ENCODE measurements at regions of chr2 and their contacts with region 1.

Region 1: DNA sequence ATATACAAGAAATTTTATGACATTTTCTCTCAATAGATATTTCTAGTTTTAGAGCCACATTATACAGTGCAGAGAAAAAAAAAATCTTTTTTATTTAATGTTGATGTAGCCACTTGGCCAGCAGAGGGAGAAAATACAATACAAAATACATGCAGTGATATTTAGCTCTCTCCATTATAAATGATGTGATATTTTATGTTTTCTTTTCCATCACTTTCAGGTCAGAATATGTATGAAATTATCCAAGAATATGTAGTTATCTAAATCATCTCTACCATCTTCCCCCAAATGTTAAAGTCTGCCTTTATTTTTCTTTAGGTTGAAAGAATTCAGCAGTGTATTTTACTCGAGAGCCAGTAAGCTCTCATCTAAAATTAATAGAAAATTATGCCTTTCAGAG is 533.6 kb upstream of the FSHR start:
- DNase-seq: no peak
- H3K4me3 Mint-ChIP-seq: no peak overlapping the region
- H3K27ac Mint-ChIP-seq: no peak overlapping the region
- H3K4me1 Mint-ChIP-seq: no peaks in the 10 kb centered on the region
- H3K27me3 Mint-ChIP-seq: no peaks in the 10 kb centered on the region

Region 2: DNA sequence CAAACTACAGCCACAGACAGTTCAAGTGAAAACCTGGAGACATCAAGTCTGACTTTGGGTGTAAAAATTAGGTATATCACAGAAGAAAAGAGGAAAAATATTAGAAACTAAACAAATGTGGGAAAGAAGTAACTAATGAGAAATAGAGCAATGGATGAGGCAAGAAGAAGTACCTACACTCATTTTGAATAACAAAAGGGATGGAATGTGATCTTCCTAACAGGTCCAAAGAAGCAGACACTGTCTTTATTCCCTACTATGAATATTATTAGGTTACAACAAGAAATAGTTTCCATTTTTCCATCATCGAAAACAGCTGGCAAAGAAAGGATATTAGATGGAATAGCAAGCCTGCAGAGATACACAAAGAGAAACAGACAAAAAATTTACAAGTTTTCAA is 47.3 kb before region 1 on chr2:
- intact Hi-C with region 1: loop called (anchors 1 kb)
- DNase-seq: no peak
- H3K4me3 Mint-ChIP-seq: no peak overlapping the region
- H3K27ac Mint-ChIP-seq: no peak overlapping the region
- H3K4me1 Mint-ChIP-seq: no peaks in the 10 kb centered on the region
- H3K27me3 Mint-ChIP-seq: no peaks in the 10 kb centered on the region

Region 3: DNA sequence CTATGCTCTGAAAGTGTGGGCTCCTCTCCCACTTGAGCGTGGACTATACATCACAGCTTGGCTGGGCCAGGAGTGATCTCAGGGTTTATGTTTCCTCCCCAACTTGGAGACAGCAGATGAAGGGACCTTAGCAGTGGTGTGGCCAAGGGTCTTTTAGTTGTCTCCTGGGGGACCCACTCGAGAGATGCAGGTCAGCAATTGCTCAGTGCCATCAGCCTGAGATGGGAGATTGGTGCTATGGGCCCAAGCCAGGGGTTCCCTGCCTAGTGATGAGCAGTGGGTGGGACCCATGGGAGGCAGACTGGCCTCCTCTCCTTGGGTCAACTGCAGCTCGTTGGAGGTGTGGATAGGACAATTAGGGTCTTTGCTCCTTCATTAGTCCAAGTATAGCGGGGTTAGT is 23.1 kb before region 1 on chr2:
- intact Hi-C with region 1: no loop called
- DNase-seq: no peak
- H3K4me3 Mint-ChIP-seq: no peak overlapping the region
- H3K27ac Mint-ChIP-seq: no peak overlapping the region
- H3K4me1 Mint-ChIP-seq: no peaks in the 10 kb centered on the region
- H3K27me3 Mint-ChIP-seq: no peaks in the 10 kb centered on the region

Region 4: DNA sequence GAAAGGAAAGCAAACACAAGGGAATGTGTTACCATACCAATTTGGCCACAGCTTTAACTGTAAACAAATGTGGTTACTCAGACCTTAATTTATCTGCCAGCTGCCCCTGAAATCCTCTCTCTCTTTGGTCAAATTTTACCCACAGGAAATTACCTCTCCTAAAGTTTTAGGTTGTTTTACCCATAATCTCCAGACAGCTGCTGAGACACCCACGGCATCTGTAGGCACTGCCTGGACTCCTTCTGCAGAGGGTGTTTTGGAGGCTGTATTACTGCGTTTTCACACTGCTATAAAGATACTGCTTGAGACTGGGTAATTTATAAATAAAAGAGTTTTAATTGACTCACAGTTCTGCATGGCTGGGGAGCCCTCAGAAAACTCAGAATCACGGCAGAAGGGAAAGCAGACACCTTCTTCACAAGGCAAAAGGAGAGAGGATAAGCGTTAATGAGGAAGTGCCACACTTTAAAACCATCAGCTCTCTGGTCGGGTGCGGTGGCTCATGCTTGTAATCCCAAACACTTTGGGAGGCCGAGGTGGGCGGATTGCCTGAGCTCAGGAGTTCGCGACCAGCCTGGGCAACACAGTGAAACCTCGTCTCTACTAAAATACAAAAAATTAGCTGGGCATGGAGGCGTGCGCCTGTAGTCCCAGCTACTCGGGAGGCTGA is 143.9 kb after region 1 on chr2:
- intact Hi-C with region 1: no loop called
- DNase-seq: no peak
- H3K4me3 Mint-ChIP-seq: no peak overlapping the region
- H3K27ac Mint-ChIP-seq: no peak overlapping the region
- H3K4me1 Mint-ChIP-seq: no peaks in the 10 kb centered on the region
- H3K27me3 Mint-ChIP-seq: no peaks in the 10 kb centered on the region

Measured in activated T-helper 1 cell treated with anti-CD3 and anti-CD28 coated beads, Interleukin-12 subunit alpha, Interleukin-12 subunit beta, Interleukin-2, Interleukin-4 antibody, amounts not matched to agents 30 ng/mL and 10 ng/mL and 1 ng/mL, durations not matched to agents 14 hours and 24 hours and 36 hours (primary cell).